ENCODE measurements at regions of chr3 and their contacts with region 1.

Region 1: GRCh38 chr3:126389112-126389793 is 5.5 kb upstream of the CFAP100 start:
- DNase-seq: peak; percentile 93
- ATAC-seq: peak; percentile 96
- H3K4me3 ChIP-seq: peak overlapping the region; percentile 21 to 61 (median 41); a peak in 3 of 6 replicates
- H3K27ac ChIP-seq: no peak overlapping the region
- H3K4me1 ChIP-seq: peaks cover 13% of the 10 kb centered on the region
- H3K27me3 ChIP-seq: peaks cover 0 to 11% of the 10 kb centered on the region in 2 experiments; a peak in 1 of 5 replicates
- CTCF ChIP-seq: peak; percentile 97
- EP300 ChIP-seq: 0 out of 4 replicates have a peak, but pooled peaks of 1 of the 2 experiments have one; percentile 17
- POLR2A ChIP-seq: no peak
- RAD21 ChIP-seq: peak; percentile 100

Region 2: DNA sequence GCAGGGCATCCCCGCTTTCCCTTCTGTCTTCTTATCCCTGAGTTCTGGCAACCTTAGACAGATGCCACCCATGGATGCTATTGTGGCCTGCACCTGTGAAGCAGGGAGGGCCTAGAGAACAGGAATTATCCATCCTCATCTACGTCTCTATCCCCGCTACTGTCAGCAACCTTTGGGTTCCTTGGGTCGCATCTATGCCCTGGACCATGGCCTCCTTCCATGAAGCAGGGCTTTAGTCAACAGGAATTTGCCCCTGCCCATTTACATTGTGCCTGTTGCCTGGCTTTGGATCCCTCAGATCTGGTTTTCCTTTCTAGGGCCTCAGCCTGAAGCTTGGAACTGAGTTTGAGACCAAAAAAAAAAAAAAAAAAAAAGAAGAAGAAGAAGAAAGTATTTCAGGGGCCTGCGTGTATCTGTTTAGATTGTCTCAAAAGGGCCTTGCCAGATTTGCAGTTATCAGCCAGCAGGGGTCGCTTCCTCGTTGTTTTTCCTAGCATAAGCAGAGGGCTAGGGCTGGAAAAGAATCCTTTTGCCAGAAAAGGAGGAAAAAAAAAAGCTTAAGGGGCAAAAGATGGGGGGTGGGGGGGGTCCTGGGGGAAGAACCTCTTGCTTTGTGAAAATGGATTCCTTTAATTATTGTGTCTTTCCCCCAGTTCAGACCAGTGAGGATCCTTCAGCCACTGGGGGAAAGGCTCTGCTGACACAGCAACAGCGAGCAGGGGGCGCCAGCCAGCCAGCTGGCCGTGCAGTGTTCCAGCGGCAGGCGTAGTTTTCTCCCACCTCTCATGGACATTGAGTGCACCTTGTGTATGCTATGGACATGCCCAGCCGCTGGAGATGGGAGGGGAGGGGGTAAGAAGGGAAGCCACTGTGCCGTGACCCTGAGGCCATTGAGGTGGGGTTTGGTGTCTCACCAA is 143.2 kb before region 1 on chr3:
- CTCF ChIA-PET with region 1: interaction called, 42 read pairs
- POLR2A ChIA-PET with region 1: no interaction called
- in situ Hi-C with region 1: loop called (anchors 5 kb)
- intact Hi-C with region 1: no loop called
- DNase-seq: peak; percentile 48
- ATAC-seq: peak; percentile 98
- H3K4me3 ChIP-seq: peak overlapping the region in 1 of 3 experiments; percentile 4; a peak in 1 of 6 replicates
- H3K27ac ChIP-seq: no peak overlapping the region
- H3K4me1 ChIP-seq: peaks cover 6% of the 10 kb centered on the region; the same call in 1 of the 2 replicates
- H3K27me3 ChIP-seq: peaks cover 0 to 3% of the 10 kb centered on the region in 2 experiments; a peak in 1 of 5 replicates
- CTCF ChIP-seq: peak; percentile 77
- EP300 ChIP-seq: no peak
- POLR2A ChIP-seq: no peak
- RAD21 ChIP-seq: 0 out of 2 replicates have a peak, but pooled peaks have one; percentile 19

Region 3: DNA sequence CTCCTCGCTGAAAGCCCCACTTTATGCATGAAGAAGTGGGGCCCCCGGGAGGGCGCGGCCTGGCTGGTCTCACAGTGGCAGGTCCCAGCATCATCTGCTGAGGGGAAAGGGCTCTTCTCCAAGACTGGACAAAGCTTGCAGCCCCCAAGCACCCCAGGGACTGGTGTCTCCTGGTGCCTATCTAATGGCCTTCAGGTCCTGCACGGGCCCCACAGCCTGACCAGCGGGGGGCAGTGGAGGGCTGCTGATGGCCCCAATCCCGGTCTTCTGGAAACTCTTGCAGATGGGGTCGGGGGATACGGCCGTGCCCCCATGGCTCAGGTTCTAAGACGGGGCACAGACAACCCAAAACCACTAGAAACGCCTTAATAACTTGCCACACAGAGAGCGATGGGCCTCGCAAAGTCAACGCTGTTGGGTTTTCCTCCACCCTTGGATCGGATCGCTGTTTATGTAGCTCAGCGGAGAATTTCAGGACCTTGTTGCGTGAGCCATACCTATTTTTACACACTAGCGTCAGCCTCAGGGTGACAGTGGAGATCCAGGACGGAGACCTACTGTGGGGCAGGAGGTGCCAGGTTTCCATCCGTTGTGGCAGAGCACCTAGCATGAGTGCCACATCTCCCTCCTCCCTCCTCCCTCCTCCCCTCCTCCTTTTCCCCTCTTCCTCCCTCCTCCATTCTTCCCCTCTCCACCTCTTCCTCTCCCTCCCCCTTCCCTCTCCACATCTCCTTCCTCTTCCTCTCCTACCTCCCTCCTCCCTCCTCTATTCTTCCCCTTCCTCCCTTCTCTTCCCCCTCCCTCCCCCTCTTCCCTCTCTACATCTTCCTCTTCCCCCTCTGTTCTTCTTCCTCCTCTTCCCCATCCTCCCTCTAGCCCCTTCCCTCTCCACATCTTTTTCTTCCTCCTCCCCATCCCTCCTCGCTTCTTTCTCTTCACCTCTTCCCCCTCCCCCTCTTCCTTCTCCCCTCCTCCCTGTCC is 129.6 kb before region 1 on chr3:
- CTCF ChIA-PET with region 1: interaction called, 54 read pairs
- POLR2A ChIA-PET with region 1: no interaction called
- in situ Hi-C with region 1: no loop called
- intact Hi-C with region 1: loop called (anchors 1 kb)
- DNase-seq: peak; percentile 29
- ATAC-seq: peak; percentile 83
- H3K4me3 ChIP-seq: no peak overlapping the region
- H3K27ac ChIP-seq: no peak overlapping the region
- H3K4me1 ChIP-seq: peaks cover 34% of the 10 kb centered on the region
- H3K27me3 ChIP-seq: no peaks in the 10 kb centered on the region
- CTCF ChIP-seq: peak; percentile 85
- EP300 ChIP-seq: no peak
- POLR2A ChIP-seq: no peak
- RAD21 ChIP-seq: peak; percentile 87

Region 4: DNA sequence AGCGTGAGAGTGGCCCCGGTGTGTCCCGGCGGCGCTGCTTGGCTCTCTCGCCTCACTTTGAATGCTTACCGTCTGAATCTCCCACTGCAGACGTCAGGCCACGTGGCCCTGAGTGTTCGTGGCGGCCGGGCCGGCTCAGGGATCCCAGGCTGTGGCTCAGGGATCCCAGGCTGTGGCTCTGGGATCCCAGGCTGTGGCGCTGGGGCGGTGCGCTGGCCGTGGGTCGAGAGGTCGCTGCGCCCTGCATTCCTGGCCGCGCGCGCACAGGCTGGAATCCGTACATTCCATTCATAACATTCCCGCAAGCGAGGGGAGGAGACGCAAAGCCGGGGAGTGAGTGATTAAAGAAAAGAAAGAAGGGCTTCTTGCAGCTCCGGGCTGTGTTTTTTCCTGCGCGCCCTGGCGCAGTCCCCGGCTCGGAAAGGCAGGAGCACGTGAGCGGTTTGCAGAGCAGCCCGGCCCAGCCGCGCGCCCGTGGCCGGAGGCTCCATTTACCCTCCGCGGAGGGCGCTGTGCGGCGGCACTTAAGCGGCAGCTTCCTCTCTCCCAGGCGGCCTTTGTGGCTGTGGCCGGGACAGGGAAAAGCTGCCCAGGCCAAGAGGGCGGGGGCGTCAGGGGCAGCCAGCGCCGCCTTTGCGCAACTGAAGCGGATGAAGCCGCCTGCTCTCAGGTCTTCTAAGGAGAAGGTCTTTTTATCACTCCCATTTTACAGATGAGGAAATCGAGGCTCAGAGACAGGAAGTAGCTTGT is 121.9 kb before region 1 on chr3:
- CTCF ChIA-PET with region 1: interaction called, 13 read pairs
- POLR2A ChIA-PET with region 1: no interaction called
- in situ Hi-C with region 1: no loop called
- intact Hi-C with region 1: no loop called
- DNase-seq: peak; percentile 88
- ATAC-seq: peak; percentile 90
- H3K4me3 ChIP-seq: peak overlapping the region; percentile 48 to 67 (median 57); a peak in 5 of 6 replicates
- H3K27ac ChIP-seq: peak overlapping the region; percentile 78
- H3K4me1 ChIP-seq: peaks cover 52% of the 10 kb centered on the region
- H3K27me3 ChIP-seq: peaks cover 0 to 2% of the 10 kb centered on the region in 2 experiments; a peak in 1 of 5 replicates
- CTCF ChIP-seq: peak; percentile 71
- EP300 ChIP-seq: no peak
- POLR2A ChIP-seq: peak in 1 of 2 experiments; percentile 52; a peak in 2 of 4 replicates
- RAD21 ChIP-seq: no peak; the same call in 1 of the 2 replicates